Activated CD4-positive, alpha-beta memory T cell treated with anti-CD3 and anti-CD28 coated beads, Interleukin-2, amount 10 ng/mL, durations not matched to agents 7 days and 5 days (primary cell): ENCODE measurements at regions of chr7 and their contacts with region 1.

Region 1: DNA sequence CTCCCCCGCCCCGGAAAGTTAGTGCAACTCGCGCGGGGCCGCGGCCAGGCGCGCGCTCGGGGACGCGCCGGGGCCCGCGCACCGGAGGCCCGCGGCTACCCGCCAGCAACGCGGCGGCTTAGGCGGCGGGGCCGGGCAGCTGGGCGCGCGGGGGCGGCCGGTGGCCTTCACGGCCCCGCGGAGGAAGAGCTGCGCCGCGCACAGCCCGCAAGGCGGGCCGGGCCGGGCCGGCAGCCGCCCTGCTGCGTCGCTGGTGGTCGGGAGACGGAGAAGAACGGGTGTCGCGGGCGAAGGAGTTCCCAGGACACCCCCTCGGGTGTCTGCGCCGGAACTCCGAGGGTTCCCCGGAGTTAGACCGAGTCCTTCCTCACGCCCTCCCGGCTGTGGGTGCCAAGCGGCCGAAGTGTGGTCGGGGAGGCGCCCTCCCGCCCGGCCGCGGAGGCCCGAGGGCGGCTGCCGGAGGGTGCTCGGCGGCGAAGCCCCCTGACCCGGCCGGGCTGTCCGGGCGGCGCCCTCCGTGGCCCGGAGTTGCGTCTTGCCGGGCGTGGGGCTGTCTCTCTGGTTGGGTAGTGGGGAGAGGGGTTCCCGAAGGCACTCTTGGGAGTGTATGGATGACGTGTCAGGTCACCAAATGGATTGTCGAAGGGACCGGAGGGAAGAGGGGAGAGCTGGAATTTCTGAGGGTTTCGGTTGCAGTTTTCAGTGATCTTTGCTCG is 584 bp downstream of the ST7 start:
- DNase-seq: peak; percentile 34
- H3K4me3 Mint-ChIP-seq: peak overlapping the region; percentile 90
- H3K27ac Mint-ChIP-seq: peak overlapping the region; percentile 82
- H3K4me1 Mint-ChIP-seq: peaks cover 30% of the 10 kb centered on the region
- H3K27me3 Mint-ChIP-seq: peaks cover 2% of the 10 kb centered on the region

Region 2: GRCh38 chr7:116824449-116824848 is 129.4 kb before region 1 on chr7:
- CTCF ChIA-PET with region 1: no interaction called
- POLR2A ChIA-PET with region 1: no interaction called
- DNase-seq: no peak
- H3K4me3 Mint-ChIP-seq: no peak overlapping the region
- H3K27ac Mint-ChIP-seq: no peak overlapping the region
- H3K4me1 Mint-ChIP-seq: no peaks in the 10 kb centered on the region
- H3K27me3 Mint-ChIP-seq: peaks cover 38% of the 10 kb centered on the region

Region 3: DNA sequence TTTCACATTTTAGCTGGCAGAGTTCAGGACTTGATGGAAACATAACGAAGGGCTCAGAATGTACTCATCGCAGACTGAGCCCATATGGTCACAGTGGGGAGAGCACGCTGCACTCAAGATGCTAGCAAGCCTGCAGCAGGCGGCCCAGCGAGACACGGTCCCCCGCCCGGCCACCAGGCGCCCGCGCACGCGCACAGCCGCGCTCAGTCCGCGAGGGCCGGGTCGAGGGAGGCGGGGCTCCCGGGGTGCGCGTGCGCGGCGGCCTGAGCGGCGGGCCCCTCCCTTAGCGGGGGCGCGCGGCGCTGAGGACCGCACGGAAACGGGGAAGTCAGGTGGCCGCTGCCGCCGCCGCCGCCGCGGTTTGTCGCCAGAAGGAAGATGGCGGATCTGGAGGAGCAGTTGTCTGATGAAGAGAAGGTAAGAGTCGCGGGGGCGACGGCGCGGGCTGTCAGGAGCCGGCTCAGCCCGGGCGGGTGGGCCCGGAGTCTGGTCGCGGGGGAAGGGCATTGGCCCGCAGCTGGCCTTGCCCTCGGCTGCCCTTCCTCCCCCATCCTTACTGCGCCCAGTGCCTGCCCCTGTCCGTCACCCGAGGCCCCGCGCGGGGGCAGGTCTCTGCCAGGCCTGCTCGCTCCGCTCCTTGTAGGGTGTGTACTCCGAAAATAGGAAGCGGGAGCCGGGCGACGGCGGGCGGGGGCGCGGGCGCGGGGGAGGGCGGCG is 91.5 kb before region 1 on chr7 and contains the start of gene CAPZA2:
- CTCF ChIA-PET with region 1: interaction called, 3 read pairs
- POLR2A ChIA-PET with region 1: interaction called, 18 read pairs
- DNase-seq: peak; percentile 95
- H3K4me3 Mint-ChIP-seq: peak within 1 kb of the TSS; percentile 97
- H3K27ac Mint-ChIP-seq: peak within 1 kb of the TSS; percentile 93
- H3K4me1 Mint-ChIP-seq: peaks cover 35% of the 10 kb centered on the region
- H3K27me3 Mint-ChIP-seq: peaks cover 9% of the 10 kb centered on the region
- total RNA-seq, gene CAPZA2: 152 to 155 TPM

Region 4: GRCh38 chr7:116899308-116899707 is 54.6 kb before region 1 on chr7:
- CTCF ChIA-PET with region 1: no interaction called
- POLR2A ChIA-PET with region 1: no interaction called
- DNase-seq: no peak
- H3K4me3 Mint-ChIP-seq: no peak overlapping the region
- H3K27ac Mint-ChIP-seq: no peak overlapping the region
- H3K4me1 Mint-ChIP-seq: no peaks in the 10 kb centered on the region
- H3K27me3 Mint-ChIP-seq: no peaks in the 10 kb centered on the region

Region 5: GRCh38 chr7:116977172-116977571 is 23.3 kb after region 1 on chr7:
- CTCF ChIA-PET with region 1: no interaction called
- POLR2A ChIA-PET with region 1: no interaction called
- DNase-seq: no peak
- H3K4me3 Mint-ChIP-seq: no peak overlapping the region
- H3K27ac Mint-ChIP-seq: no peak overlapping the region
- H3K4me1 Mint-ChIP-seq: no peaks in the 10 kb centered on the region
- H3K27me3 Mint-ChIP-seq: no peaks in the 10 kb centered on the region